ENCODE measurements at regions of chr4 and their contacts with region 1.

Region 1: GRCh38 chr4:2008875-2009703 is at the start of gene NELFA:
- DNase-seq: peak; percentile 89 to 93 (median 91)
- H3K4me3 ChIP-seq: peak within 1 kb of the TSS; percentile 63 to 95 (median 93)
- H3K4me3 Mint-ChIP-seq: peak within 1 kb of the TSS; percentile 86 to 90
- H3K27ac ChIP-seq: peak within 1 kb of the TSS; percentile 89 to 98
- H3K27ac Mint-ChIP-seq: peak within 1 kb of the TSS; percentile 89 to 94 (median 93)
- H3K4me1 ChIP-seq: peaks cover 38 to 44% of the 10 kb centered on the region in 2 donors
- H3K4me1 Mint-ChIP-seq: peaks cover 41% of the 10 kb centered on the region
- H3K27me3 ChIP-seq: peaks cover 0 to under 1% of the 10 kb centered on the region in 2 donors
- H3K27me3 Mint-ChIP-seq: peaks cover 5 to 12% (median 6%) of the 10 kb centered on the region in 3 donors
- CTCF ChIP-seq: no peak
- polyA plus RNA-seq, gene NELFA: 10.0 to 22.1 (median 10.5) TPM

Region 2: GRCh38 chr4:1721004-1721665 is 288.0 kb before region 1 on chr4 and contains the starts of genes TACC3 and TMEM129:
- intact Hi-C with region 1: loop called in 1 of 2 experiments (anchors 10 kb)
- DNase-seq: peak; percentile 88 to 91 (median 89)
- H3K4me3 ChIP-seq: peak within 1 kb of the TSS; percentile 51 to 80 (median 56)
- H3K4me3 Mint-ChIP-seq: peak within 1 kb of the TSS; percentile 85 to 98
- H3K27ac ChIP-seq: peak within 1 kb of the TSS; percentile 88 to 96
- H3K27ac Mint-ChIP-seq: peak within 1 kb of the TSS; percentile 97 to 100 (median 98)
- H3K4me1 ChIP-seq: peaks cover 59 to 75% of the 10 kb centered on the region in 2 donors
- H3K4me1 Mint-ChIP-seq: peaks cover 62% of the 10 kb centered on the region
- H3K27me3 ChIP-seq: no peaks in the 10 kb centered on the region
- H3K27me3 Mint-ChIP-seq: peaks cover 0 to 3% (median 0%) of the 10 kb centered on the region in 3 donors
- CTCF ChIP-seq: no peak
- polyA plus RNA-seq, gene TACC3: 43.7 to 84.2 (median 56.6) TPM
- polyA plus RNA-seq, gene TMEM129: 22.4 to 40.2 (median 24.1) TPM

Region 3: GRCh38 chr4:1870578-1871443 is 138.3 kb before region 1 on chr4 and contains the start of gene NSD2:
- intact Hi-C with region 1: loop called in 1 of 2 experiments (anchors 10 kb)
- DNase-seq: peak; percentile 83 to 91 (median 87)
- H3K4me3 ChIP-seq: peak within 1 kb of the TSS; percentile 59 to 87 (median 82)
- H3K4me3 Mint-ChIP-seq: peak within 1 kb of the TSS; percentile 87 to 90
- H3K27ac ChIP-seq: peak within 1 kb of the TSS; percentile 68 to 91
- H3K27ac Mint-ChIP-seq: peak within 1 kb of the TSS; percentile 67 to 93 (median 87)
- H3K4me1 ChIP-seq: peaks cover 19 to 30% of the 10 kb centered on the region in 2 donors
- H3K4me1 Mint-ChIP-seq: peaks cover 27% of the 10 kb centered on the region
- H3K27me3 ChIP-seq: no peaks in the 10 kb centered on the region
- H3K27me3 Mint-ChIP-seq: peaks cover 7 to 14% (median 7%) of the 10 kb centered on the region in 3 donors
- CTCF ChIP-seq: no peak
- polyA plus RNA-seq, gene NSD2: 1.9 to 8.7 (median 2.3) TPM

Region 4: GRCh38 chr4:2041234-2042130 is 32.4 kb after region 1 on chr4:
- intact Hi-C with region 1: loop called (anchors 2 to 5 kb)
- DNase-seq: peak; percentile 92 to 95 (median 94)
- H3K4me3 ChIP-seq: peak overlapping the region; percentile 43 to 79 (median 64)
- H3K4me3 Mint-ChIP-seq: peak overlapping the region; percentile 84 to 97
- H3K27ac ChIP-seq: peak overlapping the region in 1 of 2 donors; percentile 56
- H3K27ac Mint-ChIP-seq: peak overlapping the region in 5 of 7 donors; percentile 15 to 84 (median 78)
- H3K4me1 ChIP-seq: peaks cover 14 to 19% of the 10 kb centered on the region in 2 donors
- H3K4me1 Mint-ChIP-seq: peaks cover 12% of the 10 kb centered on the region
- H3K27me3 ChIP-seq: peaks cover 17 to 56% of the 10 kb centered on the region in 2 donors
- H3K27me3 Mint-ChIP-seq: peaks cover 35 to 71% (median 41%) of the 10 kb centered on the region in 3 donors
- CTCF ChIP-seq: no peak

Region 5: DNA sequence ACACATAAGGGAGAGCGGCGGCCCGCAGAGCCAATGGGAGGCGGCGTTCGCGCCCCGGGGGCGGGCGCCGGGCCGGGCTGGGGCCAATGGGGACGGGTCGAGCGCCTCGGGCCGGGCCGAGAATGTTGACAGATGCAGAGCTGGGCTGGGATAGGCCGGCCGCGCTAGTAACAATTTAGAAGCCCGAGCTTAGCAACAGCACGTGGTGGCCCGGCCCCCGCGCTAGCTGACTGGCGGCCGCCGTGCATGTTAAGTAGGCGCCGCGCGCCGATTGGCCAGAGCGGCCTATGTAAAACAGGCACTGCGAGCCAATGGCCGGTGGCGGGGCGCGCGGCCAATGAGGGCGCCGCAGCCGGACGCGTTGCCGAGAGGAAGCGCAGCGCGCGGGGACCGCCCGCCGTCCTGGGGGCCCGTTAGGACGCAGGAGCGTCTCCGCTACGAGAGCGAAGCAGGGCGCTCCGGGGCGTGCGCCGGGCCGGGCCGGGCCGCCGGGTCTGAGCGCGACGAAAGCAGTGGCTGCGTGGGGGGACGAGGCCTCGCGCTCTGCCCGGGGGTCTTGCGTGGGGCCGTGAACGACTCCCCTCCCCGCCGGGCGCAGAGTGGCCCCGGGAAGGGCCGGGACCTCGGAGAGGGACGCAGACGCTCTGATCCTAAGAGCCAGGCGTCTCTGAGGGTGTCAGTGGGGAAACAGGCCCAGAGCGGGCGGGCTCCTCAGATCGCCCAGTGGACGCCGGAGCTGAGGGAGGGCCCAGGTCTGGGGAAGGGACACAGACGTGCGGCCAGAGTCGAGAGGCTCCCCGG is 253.3 kb after region 1 on chr4:
- intact Hi-C with region 1: loop called in 1 of 2 experiments (anchors 5 kb)
- DNase-seq: peak; percentile 98 to 99 (median 98)
- H3K4me3 ChIP-seq: peak overlapping the region; percentile 53 to 93 (median 65)
- H3K4me3 Mint-ChIP-seq: peak overlapping the region; percentile 74 to 83
- H3K27ac ChIP-seq: peak overlapping the region; percentile 86 to 87
- H3K27ac Mint-ChIP-seq: peak overlapping the region; percentile 65 to 87 (median 81)
- H3K4me1 ChIP-seq: peaks cover 22 to 25% of the 10 kb centered on the region in 2 donors
- H3K4me1 Mint-ChIP-seq: peaks cover 15% of the 10 kb centered on the region
- H3K27me3 ChIP-seq: no peaks in the 10 kb centered on the region
- H3K27me3 Mint-ChIP-seq: peaks cover 0 to 3% (median 0%) of the 10 kb centered on the region in 3 donors
- CTCF ChIP-seq: no peak